ENCODE measurements at regions of chr12 and their contacts with region 1.

Region 1: DNA sequence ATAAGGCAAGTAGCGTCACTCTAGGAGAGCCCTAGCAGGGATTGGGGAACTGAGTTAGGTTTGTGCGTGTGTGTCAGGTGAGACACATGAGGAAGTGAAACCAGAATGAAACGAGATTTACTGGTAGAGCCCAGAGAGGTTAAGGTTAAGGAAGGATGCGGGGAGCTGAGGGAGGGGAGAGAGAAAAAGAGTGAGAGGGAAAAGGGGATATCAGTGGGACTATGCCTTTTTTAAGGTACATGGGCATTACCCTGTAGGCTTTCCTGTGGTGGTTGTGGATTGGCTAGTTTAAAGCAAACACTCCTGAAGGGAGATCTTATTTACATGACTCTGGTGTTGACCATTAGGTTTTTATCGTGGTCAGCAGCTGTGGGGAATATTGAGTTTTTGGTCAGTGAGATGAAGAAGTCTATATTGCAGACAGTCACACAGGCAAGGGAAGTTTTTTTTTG is 13.9 kb downstream of the ZDHHC17 start:
- DNase-seq: no peak
- ATAC-seq: peak; percentile 70
- H3K4me3 ChIP-seq: no peak overlapping the region
- H3K4me3 Mint-ChIP-seq: peak overlapping the region in 8 of 10 donors; percentile 14 to 67 (median 48)
- H3K27ac ChIP-seq: no peak overlapping the region
- H3K27ac Mint-ChIP-seq: peak overlapping the region in 8 of 9 donors; percentile 0 to 90 (median 52)
- H3K4me1 ChIP-seq: peaks cover 5 to 7% of the 10 kb centered on the region in 2 donors
- H3K4me1 Mint-ChIP-seq: peaks cover 25 to 95% (median 82%) of the 10 kb centered on the region in 7 donors
- H3K27me3 ChIP-seq: no peaks in the 10 kb centered on the region
- H3K27me3 Mint-ChIP-seq: no peaks in the 10 kb centered on the region

Region 2: GRCh38 chr12:76763743-76764675 is 13.8 kb before region 1 on chr12 and contains the start of gene ZDHHC17:
- CTCF ChIA-PET with region 1: no interaction called
- POLR2A ChIA-PET with region 1: interaction called, 7 read pairs
- intact Hi-C with region 1: loop called in 1 of 2 experiments (anchors 1 kb)
- DNase-seq: peak; percentile 90 to 95 (median 93)
- ATAC-seq: peak; percentile 90
- H3K4me3 ChIP-seq: peak within 1 kb of the TSS; percentile 84
- H3K4me3 Mint-ChIP-seq: peak within 1 kb of the TSS; percentile 92 to 98 (median 97)
- H3K27ac ChIP-seq: peak within 1 kb of the TSS; percentile 94
- H3K27ac Mint-ChIP-seq: peak within 1 kb of the TSS; percentile 95 to 99 (median 97)
- H3K4me1 ChIP-seq: peaks cover 8 to 13% of the 10 kb centered on the region in 2 donors
- H3K4me1 Mint-ChIP-seq: peaks cover 17 to 57% (median 46%) of the 10 kb centered on the region in 7 donors
- H3K27me3 ChIP-seq: no peaks in the 10 kb centered on the region
- H3K27me3 Mint-ChIP-seq: peaks cover 0 to 13% (median 0%) of the 10 kb centered on the region in 5 donors
- total RNA-seq, gene ZDHHC17: 27.3 to 60.9 (median 56.3) TPM

Measured in naive thymus-derived CD4-positive, alpha-beta T cell (primary cell).